GM18951 (cell line): ENCODE measurements at regions of chr9 and their contacts with region 1.

Region 1: GRCh38 chr9:91659529-91660495 is 236.2 kb upstream of the NFIL3 start:
- POLR2A ChIP-seq: no peak

Region 2: GRCh38 chr9:90914868-90915483 is 744.8 kb before region 1 on chr9:
- in situ Hi-C with region 1: loop called (anchors 25 kb)
- POLR2A ChIP-seq: no peak